HCT116 (cell line): ENCODE measurements at regions of chr20 and their contacts with region 1.

Region 1: DNA sequence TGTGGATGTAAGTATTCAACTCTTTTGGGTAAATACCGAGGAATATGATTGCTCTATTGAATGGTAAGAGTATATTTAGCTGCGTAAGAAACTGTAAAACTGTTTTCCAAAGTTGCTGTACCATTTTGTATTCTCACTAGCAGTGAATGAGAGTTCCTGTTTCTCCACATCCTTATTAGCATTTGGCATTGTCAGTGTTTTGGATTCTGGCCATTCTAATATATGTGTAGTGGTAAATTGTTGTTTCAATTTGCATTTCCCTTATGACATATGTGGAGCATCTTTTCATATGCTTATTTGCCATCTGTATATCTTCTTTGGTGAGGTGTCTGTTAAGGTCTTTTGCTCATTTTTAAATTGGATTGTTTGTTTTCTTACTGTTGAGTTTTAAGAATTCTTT is 29.3 kb upstream of the KAT14 start:
- DNase-seq: no peak
- ATAC-seq: no peak
- H3K4me3 ChIP-seq: no peak overlapping the region
- H3K27ac ChIP-seq: no peak overlapping the region
- H3K4me1 ChIP-seq: no peaks in the 10 kb centered on the region
- H3K27me3 ChIP-seq: no peaks in the 10 kb centered on the region
- CTCF ChIP-seq: no peak
- POLR2A ChIP-seq: no peak
- RAD21 ChIP-seq: no peak

Region 2: GRCh38 chr20:18066421-18067336 is 41.6 kb before region 1 on chr20:
- CTCF ChIA-PET with region 1: no interaction called
- POLR2A ChIA-PET with region 1: no interaction called
- RAD21 ChIA-PET with region 1: no interaction called
- intact Hi-C with region 1: loop called (anchors 10 kb)
- DNase-seq: no peak
- ATAC-seq: no peak
- H3K4me3 ChIP-seq: no peak overlapping the region
- H3K27ac ChIP-seq: no peak overlapping the region
- H3K4me1 ChIP-seq: no peaks in the 10 kb centered on the region
- H3K27me3 ChIP-seq: 0 out of 2 replicates have a peak, but pooled peaks cover 3% of the 10 kb centered on the region
- CTCF ChIP-seq: peak in 2 of 3 experiments; percentile 14 to 24; a peak in 1 of 6 replicates
- POLR2A ChIP-seq: no peak
- RAD21 ChIP-seq: no peak

Region 3: GRCh38 chr20:18224968-18225568 is 116.7 kb after region 1 on chr20:
- CTCF ChIA-PET with region 1: no interaction called
- POLR2A ChIA-PET with region 1: no interaction called
- RAD21 ChIA-PET with region 1: no interaction called
- intact Hi-C with region 1: no loop called
- DNase-seq: peak; percentile 12
- ATAC-seq: peak; percentile 80
- H3K4me3 ChIP-seq: 0 out of 4 replicates have a peak overlapping the region, but pooled peaks of 1 of the 2 experiments have one; percentile 16
- H3K27ac ChIP-seq: peak overlapping the region; percentile 30
- H3K4me1 ChIP-seq: peaks cover 14 to 21% of the 10 kb centered on the region in 2 experiments
- H3K27me3 ChIP-seq: no peaks in the 10 kb centered on the region
- CTCF ChIP-seq: no peak
- POLR2A ChIP-seq: no peak
- RAD21 ChIP-seq: no peak

Region 4: DNA sequence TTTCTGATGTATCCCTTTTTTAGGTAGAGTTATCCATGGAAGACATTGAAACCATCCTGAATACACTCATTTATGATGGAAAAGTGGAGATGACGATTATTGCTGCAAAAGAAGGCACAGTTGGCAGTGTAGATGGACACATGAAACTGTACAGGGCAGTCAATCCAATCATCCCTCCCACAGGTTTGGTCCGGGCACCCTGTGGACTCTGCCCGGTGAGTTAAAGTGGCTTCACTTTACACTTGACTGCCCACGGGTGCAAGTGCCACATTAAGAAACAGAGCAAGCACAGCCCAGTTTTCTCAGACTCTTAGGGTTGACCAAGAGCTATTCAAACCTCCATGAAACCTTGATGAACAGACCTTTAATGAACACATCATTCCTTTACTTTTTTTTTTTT is 373.3 kb after region 1 on chr20:
- CTCF ChIA-PET with region 1: no interaction called
- POLR2A ChIA-PET with region 1: no interaction called
- RAD21 ChIA-PET with region 1: no interaction called
- intact Hi-C with region 1: no loop called
- DNase-seq: no peak
- ATAC-seq: no peak
- H3K4me3 ChIP-seq: no peak overlapping the region
- H3K27ac ChIP-seq: no peak overlapping the region
- H3K4me1 ChIP-seq: no peaks in the 10 kb centered on the region
- H3K27me3 ChIP-seq: no peaks in the 10 kb centered on the region
- CTCF ChIP-seq: no peak
- POLR2A ChIP-seq: no peak
- RAD21 ChIP-seq: no peak